Activated T-helper 1 cell treated with anti-CD3 and anti-CD28 coated beads, Interleukin-12 subunit alpha, Interleukin-12 subunit beta, Interleukin-2, Interleukin-4 antibody, amounts not matched to agents 30 ng/mL and 10 ng/mL and 1 ng/mL, durations not matched to agents 14 hours and 24 hours and 36 hours (primary cell): ENCODE measurements at regions of chr16 and their contacts with region 1.

Region 1: GRCh38 chr16:10737068-10737625 is 6.5 kb upstream of the NUBP1 start:
- DNase-seq: peak; percentile 60
- H3K4me3 Mint-ChIP-seq: peak overlapping the region; percentile 39
- H3K27ac Mint-ChIP-seq: peak overlapping the region; percentile 58
- H3K4me1 Mint-ChIP-seq: peaks cover 36% of the 10 kb centered on the region
- H3K27me3 Mint-ChIP-seq: peaks cover 2% of the 10 kb centered on the region

Region 2: GRCh38 chr16:9159839-9160550 is 1577.2 kb before region 1 on chr16:
- intact Hi-C with region 1: loop called (anchors 10 kb)
- DNase-seq: peak; percentile 47
- H3K4me3 Mint-ChIP-seq: no peak overlapping the region
- H3K27ac Mint-ChIP-seq: no peak overlapping the region
- H3K4me1 Mint-ChIP-seq: peaks cover 8% of the 10 kb centered on the region
- H3K27me3 Mint-ChIP-seq: peaks cover 8% of the 10 kb centered on the region

Region 3: GRCh38 chr16:10242916-10243315 is 494.2 kb before region 1 on chr16:
- intact Hi-C with region 1: no loop called
- DNase-seq: no peak
- H3K4me3 Mint-ChIP-seq: no peak overlapping the region
- H3K27ac Mint-ChIP-seq: no peak overlapping the region
- H3K4me1 Mint-ChIP-seq: no peaks in the 10 kb centered on the region
- H3K27me3 Mint-ChIP-seq: no peaks in the 10 kb centered on the region

Region 4: DNA sequence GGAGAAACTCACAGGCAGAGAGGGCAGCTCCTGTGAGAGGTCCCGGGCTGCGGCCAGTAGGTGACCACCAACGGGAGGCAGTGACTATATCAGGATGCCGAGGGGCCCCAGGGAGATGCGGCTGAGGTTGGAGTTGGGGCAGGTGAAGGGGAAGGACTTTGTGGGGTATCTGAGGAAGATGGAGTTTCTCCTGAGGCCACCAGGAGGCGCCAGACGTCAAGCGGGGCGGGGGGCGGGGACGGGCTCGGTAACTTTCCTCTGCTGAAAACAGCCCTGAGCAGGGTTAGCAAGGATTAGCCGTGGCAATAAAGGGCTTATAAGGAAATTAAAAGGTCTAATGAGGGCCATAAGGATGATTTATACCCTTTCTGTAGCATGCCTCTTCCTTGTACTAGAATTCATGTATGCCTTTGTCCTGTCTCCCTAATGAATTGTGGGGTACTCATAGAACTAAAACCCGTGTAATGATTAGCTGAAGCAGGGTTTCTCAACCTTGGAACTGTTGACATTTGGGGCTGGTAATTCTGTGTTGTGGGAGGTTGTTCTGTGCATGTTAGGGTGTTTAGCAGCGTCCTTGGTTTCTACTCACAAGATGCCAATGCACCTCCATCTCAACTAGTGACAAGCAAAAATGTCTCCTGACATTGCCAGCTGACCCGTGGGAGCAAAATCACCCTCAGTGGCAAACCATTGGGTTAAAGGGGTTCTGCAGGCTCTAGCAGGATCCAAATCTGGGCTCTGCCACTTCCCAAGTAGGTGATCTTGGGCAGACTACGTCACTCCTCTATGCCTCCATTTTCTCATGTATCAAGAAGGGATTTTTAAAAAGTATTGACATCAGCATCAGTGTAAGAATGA is 480.1 kb before region 1 on chr16:
- intact Hi-C with region 1: loop called (anchors 1 kb)
- DNase-seq: peak; percentile 6
- H3K4me3 Mint-ChIP-seq: no peak overlapping the region
- H3K27ac Mint-ChIP-seq: no peak overlapping the region
- H3K4me1 Mint-ChIP-seq: no peaks in the 10 kb centered on the region
- H3K27me3 Mint-ChIP-seq: no peaks in the 10 kb centered on the region

Region 5: GRCh38 chr16:10314811-10315210 is 422.3 kb before region 1 on chr16:
- intact Hi-C with region 1: loop called (anchors 2 kb)
- DNase-seq: no peak
- H3K4me3 Mint-ChIP-seq: no peak overlapping the region
- H3K27ac Mint-ChIP-seq: no peak overlapping the region
- H3K4me1 Mint-ChIP-seq: peaks cover 17% of the 10 kb centered on the region
- H3K27me3 Mint-ChIP-seq: no peaks in the 10 kb centered on the region

Region 6: DNA sequence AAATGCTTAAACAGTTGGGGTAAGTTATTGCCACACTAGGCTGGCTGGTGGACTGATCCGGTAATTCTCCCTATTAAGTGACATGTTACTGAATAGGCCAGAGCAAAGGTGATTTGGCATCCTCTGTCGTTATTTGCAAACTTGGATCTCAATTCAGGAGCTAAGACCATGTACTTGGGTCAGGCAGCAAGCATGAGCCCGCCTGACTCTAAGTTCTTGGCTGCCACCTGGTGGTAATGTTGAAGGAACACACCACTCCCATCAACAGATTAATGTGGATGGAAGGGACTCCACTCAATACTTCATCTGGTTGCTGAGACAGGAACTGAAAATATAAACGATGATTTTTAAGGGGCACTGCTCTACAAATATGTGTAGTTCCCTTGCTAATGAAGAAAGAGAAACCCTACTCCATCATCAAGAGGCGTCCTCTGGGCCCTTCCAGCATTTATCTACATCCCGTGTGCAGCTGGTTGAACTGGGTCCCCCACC is 227.6 kb before region 1 on chr16:
- intact Hi-C with region 1: loop called (anchors 1 kb)
- DNase-seq: peak; percentile 49
- H3K4me3 Mint-ChIP-seq: no peak overlapping the region
- H3K27ac Mint-ChIP-seq: peak overlapping the region; percentile 64
- H3K4me1 Mint-ChIP-seq: peaks cover 11% of the 10 kb centered on the region
- H3K27me3 Mint-ChIP-seq: peaks cover 14% of the 10 kb centered on the region

Region 7: DNA sequence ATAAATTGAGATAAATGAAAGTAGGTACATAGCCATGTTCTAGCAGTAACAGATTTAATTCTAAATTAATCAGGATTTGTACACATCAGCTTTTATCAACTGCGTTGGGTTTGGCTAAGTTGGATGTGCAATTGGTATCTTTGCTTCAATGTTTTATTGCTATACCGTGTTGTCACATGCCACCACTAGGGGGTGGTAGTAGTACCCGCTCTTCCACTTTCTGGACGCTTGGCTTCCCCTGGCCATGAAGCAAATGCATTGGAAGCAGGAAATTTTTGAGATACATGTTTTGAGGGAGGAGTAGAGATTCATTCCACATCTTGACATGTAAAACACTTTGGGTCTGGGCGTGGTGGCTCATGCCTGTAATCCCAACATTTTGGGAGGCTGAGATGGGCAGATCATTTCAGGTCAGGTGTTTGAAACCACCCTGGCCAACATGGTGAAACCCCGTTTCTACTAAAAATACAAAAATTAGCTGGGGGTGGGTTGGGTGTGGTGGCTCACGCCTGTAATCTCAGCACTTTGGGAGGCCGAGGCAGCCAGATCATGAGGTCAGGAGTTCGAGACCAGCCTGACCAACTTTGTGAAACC is 215.4 kb before region 1 on chr16:
- intact Hi-C with region 1: loop called (anchors 1 kb)
- DNase-seq: no peak
- H3K4me3 Mint-ChIP-seq: no peak overlapping the region
- H3K27ac Mint-ChIP-seq: no peak overlapping the region
- H3K4me1 Mint-ChIP-seq: peaks cover 4% of the 10 kb centered on the region
- H3K27me3 Mint-ChIP-seq: no peaks in the 10 kb centered on the region

Region 8: GRCh38 chr16:10812312-10813098 is 75.4 kb after region 1 on chr16:
- intact Hi-C with region 1: no loop called
- DNase-seq: no peak
- H3K4me3 Mint-ChIP-seq: peak overlapping the region; percentile 66
- H3K27ac Mint-ChIP-seq: peak overlapping the region; percentile 67
- H3K4me1 Mint-ChIP-seq: peaks cover 20% of the 10 kb centered on the region
- H3K27me3 Mint-ChIP-seq: peaks cover 3% of the 10 kb centered on the region